Right ventricle myocardium superior (tissue), 1 donor: ENCODE measurements at regions of chr2 and their contacts with region 1.

Region 1: DNA sequence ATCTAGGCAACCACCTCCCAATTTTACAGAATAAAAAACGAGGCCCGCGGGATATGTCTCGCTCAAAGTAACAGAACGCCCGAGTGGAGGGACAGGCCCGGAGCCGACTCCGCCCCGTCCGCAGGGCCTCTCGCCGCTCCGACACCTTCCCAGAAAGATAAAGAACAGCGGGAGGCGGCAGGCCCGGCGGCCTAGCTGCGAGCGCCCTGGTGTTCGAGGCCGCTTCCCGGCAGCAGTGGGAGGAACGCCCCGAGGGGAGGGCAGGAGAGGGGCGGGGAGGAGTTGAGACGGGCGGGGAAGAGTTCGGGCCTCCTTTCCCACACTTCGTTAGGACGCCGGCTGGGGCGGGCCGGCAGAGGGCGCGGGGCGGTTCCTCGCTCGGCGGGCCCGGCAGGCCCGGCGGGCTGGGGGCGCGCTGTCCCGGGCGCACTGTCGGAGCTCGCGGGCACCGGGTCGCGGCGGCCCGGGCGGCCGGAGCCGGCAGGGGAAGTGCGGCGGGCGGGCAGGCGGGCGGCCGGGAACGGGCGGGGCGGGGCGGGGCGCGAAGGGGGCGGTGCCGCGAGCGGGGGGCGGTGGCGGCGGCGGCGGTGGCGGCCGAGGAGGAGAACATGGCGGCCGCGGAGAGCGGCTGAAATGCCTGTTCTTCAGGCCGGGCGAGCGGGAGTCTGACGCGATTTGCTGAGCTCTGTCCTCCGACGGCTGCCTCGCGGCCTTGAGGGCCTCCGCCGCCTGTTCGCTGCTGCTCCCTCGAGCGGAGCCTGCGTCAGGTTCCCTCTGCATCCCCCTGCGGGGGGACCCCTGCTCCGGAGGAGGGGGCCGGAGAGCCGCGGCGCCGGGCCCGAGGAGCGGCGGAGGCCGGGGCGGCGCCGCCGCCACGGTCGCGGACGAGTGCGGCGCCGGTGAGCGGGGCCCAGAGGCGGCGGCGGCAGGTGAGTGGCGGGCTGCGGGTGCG is at the start of gene NCOA1:
- DNase-seq: peak; percentile 94
- ATAC-seq: peak; percentile 89
- total RNA-seq, gene NCOA1: 32.2 TPM

Region 2: GRCh38 chr2:24435391-24436316 is 55.3 kb before region 1 on chr2:
- intact Hi-C with region 1: loop called (anchors 5 kb)
- DNase-seq: peak; percentile 78
- ATAC-seq: peak; percentile 84

Region 3: GRCh38 chr2:24672589-24672988 is 181.6 kb after region 1 on chr2:
- intact Hi-C with region 1: loop called (anchors 10 kb)
- DNase-seq: no peak
- ATAC-seq: no peak

Region 4: GRCh38 chr2:24792874-24793760 is 302.2 kb after region 1 on chr2 and contains the starts of genes CENPO and PTRHD1:
- intact Hi-C with region 1: loop called (anchors 5 kb)
- DNase-seq: peak; percentile 98
- ATAC-seq: peak; percentile 100
- total RNA-seq, gene CENPO: 2.2 TPM
- total RNA-seq, gene PTRHD1: 31.4 TPM